Activated B cell treated with CpG ODN at 0.5 μM for 24 hours (primary cell): ENCODE measurements at regions of chr1 and their contacts with region 1.

Region 1: GRCh38 chr1:92858564-92859399 is 26.9 kb downstream of the RPL5 start:
- DNase-seq: no peak
- ATAC-seq: peak; percentile 97
- H3K4me3 Mint-ChIP-seq: no peak overlapping the region
- H3K27ac Mint-ChIP-seq: no peak overlapping the region
- H3K4me1 Mint-ChIP-seq: peaks cover 14% of the 10 kb centered on the region
- H3K27me3 Mint-ChIP-seq: no peaks in the 10 kb centered on the region
- CTCF ChIP-seq: peak; percentile 100

Region 2: GRCh38 chr1:92792340-92792782 is 66.4 kb before region 1 on chr1:
- CTCF ChIA-PET with region 1: no interaction called
- POLR2A ChIA-PET with region 1: no interaction called
- intact Hi-C with region 1: no loop called
- DNase-seq: no peak
- ATAC-seq: no peak
- H3K4me3 Mint-ChIP-seq: no peak overlapping the region
- H3K27ac Mint-ChIP-seq: no peak overlapping the region
- H3K4me1 Mint-ChIP-seq: no peaks in the 10 kb centered on the region
- H3K27me3 Mint-ChIP-seq: peaks cover 2% of the 10 kb centered on the region
- CTCF ChIP-seq: no peak

Region 3: GRCh38 chr1:92910081-92910480 is 51.3 kb after region 1 on chr1:
- CTCF ChIA-PET with region 1: interaction called, 4 read pairs
- POLR2A ChIA-PET with region 1: interaction called, 3 read pairs
- intact Hi-C with region 1: loop called (anchors 5 kb)
- DNase-seq: no peak
- ATAC-seq: no peak
- H3K4me3 Mint-ChIP-seq: no peak overlapping the region
- H3K27ac Mint-ChIP-seq: no peak overlapping the region
- H3K4me1 Mint-ChIP-seq: peaks cover 44% of the 10 kb centered on the region
- H3K27me3 Mint-ChIP-seq: no peaks in the 10 kb centered on the region
- CTCF ChIP-seq: no peak

Region 4: GRCh38 chr1:92951141-92951582 is 92.4 kb after region 1 on chr1:
- CTCF ChIA-PET with region 1: interaction called, 8 read pairs
- POLR2A ChIA-PET with region 1: interaction called, 3 read pairs
- intact Hi-C with region 1: loop called (anchors 2 kb)
- DNase-seq: no peak
- ATAC-seq: peak; percentile 79
- H3K4me3 Mint-ChIP-seq: no peak overlapping the region
- H3K27ac Mint-ChIP-seq: no peak overlapping the region
- H3K4me1 Mint-ChIP-seq: peaks cover 34% of the 10 kb centered on the region
- H3K27me3 Mint-ChIP-seq: no peaks in the 10 kb centered on the region
- CTCF ChIP-seq: no peak

Region 5: GRCh38 chr1:92968138-92969032 is 109.6 kb after region 1 on chr1:
- CTCF ChIA-PET with region 1: interaction called, 26 read pairs
- POLR2A ChIA-PET with region 1: no interaction called
- intact Hi-C with region 1: no loop called
- DNase-seq: no peak
- ATAC-seq: peak; percentile 74
- H3K4me3 Mint-ChIP-seq: no peak overlapping the region
- H3K27ac Mint-ChIP-seq: peak overlapping the region; percentile 4
- H3K4me1 Mint-ChIP-seq: peaks cover 45% of the 10 kb centered on the region
- H3K27me3 Mint-ChIP-seq: no peaks in the 10 kb centered on the region
- CTCF ChIP-seq: peak; percentile 38

Region 6: DNA sequence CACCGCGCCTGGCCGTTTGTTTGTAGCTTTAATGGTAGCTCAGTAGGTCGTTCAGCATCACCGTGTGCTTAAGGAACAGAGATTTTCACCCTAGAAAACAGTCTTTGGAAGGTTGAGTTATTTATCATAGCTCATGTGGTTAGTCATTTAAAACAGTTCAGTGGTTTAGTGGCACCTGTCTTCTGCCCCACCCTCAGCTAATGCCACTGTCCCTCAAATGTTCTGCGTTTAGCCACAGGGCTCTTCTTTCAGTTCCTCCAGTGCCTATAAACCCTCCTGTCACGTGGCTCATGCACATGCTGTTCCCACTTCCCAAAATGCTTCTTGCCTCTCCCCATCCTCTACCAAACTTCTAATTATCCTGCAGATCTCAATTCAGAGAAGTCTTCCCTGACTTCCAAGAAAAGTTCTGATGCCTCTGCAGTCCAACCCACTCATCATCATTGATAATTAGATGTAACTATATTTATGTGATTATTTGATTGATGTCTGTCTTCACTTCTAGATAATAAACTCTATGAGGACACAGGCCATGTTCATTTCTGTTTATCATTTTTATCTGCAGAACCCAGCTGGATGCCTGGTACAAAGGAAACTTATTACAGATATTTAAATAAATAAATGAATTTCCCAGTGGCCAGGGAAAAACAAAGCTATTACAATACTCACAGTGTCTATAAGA is 116.9 kb after region 1 on chr1:
- CTCF ChIA-PET with region 1: interaction called, 15 read pairs
- POLR2A ChIA-PET with region 1: interaction called, 6 read pairs
- intact Hi-C with region 1: no loop called
- DNase-seq: peak; percentile 48
- ATAC-seq: peak; percentile 73
- H3K4me3 Mint-ChIP-seq: peak overlapping the region; percentile 67
- H3K27ac Mint-ChIP-seq: peak overlapping the region; percentile 99
- H3K4me1 Mint-ChIP-seq: peaks cover 91% of the 10 kb centered on the region
- H3K27me3 Mint-ChIP-seq: no peaks in the 10 kb centered on the region
- CTCF ChIP-seq: no peak

Region 7: DNA sequence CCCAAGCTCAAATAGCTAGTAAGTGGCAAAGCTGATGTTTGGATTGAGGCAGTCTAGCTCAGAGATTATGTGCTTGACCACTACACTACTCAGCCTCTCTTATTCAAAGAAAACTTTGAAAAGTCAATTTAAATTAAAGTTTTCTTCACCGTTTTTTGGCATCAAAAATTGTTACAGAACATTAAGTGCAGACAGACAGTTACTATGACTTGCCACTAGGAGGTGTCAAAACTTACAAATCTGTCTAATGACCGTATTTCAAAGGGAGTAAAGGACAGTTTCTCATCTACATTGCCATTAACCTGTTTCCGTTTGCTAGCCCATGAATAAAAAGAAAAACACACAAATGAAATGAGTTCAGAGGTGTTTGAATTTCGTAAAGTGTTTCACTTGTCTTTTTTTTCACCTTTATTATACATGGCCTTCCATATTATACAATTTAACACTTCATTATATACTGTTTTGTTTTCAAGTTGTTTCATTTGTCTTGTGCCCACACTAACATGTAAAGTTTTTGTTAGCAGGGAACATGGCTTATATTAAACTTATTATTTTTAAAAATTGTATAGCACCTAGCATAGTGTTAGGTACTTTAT is 162.9 kb after region 1 on chr1:
- CTCF ChIA-PET with region 1: interaction called, 6 read pairs
- POLR2A ChIA-PET with region 1: no interaction called
- intact Hi-C with region 1: loop called (anchors 1 kb)
- DNase-seq: no peak
- ATAC-seq: peak; percentile 91
- H3K4me3 Mint-ChIP-seq: no peak overlapping the region
- H3K27ac Mint-ChIP-seq: no peak overlapping the region
- H3K4me1 Mint-ChIP-seq: peaks cover 11% of the 10 kb centered on the region
- H3K27me3 Mint-ChIP-seq: peaks cover 2% of the 10 kb centered on the region
- CTCF ChIP-seq: peak; percentile 97

Region 8: GRCh38 chr1:93061895-93062792 is 203.4 kb after region 1 on chr1:
- CTCF ChIA-PET with region 1: interaction called, 11 read pairs
- POLR2A ChIA-PET with region 1: no interaction called
- intact Hi-C with region 1: loop called (anchors 1 kb)
- DNase-seq: no peak
- ATAC-seq: peak; percentile 82
- H3K4me3 Mint-ChIP-seq: no peak overlapping the region
- H3K27ac Mint-ChIP-seq: no peak overlapping the region
- H3K4me1 Mint-ChIP-seq: no peaks in the 10 kb centered on the region
- H3K27me3 Mint-ChIP-seq: peaks cover 13% of the 10 kb centered on the region
- CTCF ChIP-seq: no peak